ENCODE measurements at regions of chr10 and their contacts with region 1.

Region 1: GRCh38 chr10:69179743-69180524 is at the start of gene SUPV3L1:
- DNase-seq: peak; percentile 99
- ATAC-seq: peak; percentile 88
- H3K4me3 ChIP-seq: peak within 1 kb of the TSS; percentile 83
- H3K27ac ChIP-seq: peak within 1 kb of the TSS; percentile 75
- H3K4me1 ChIP-seq: peaks cover 23% of the 10 kb centered on the region
- H3K27me3 ChIP-seq: no peaks in the 10 kb centered on the region
- CTCF ChIP-seq: no peak
- total RNA-seq, gene SUPV3L1: 86.2 and 117 TPM in 2 replicates

Region 2: DNA sequence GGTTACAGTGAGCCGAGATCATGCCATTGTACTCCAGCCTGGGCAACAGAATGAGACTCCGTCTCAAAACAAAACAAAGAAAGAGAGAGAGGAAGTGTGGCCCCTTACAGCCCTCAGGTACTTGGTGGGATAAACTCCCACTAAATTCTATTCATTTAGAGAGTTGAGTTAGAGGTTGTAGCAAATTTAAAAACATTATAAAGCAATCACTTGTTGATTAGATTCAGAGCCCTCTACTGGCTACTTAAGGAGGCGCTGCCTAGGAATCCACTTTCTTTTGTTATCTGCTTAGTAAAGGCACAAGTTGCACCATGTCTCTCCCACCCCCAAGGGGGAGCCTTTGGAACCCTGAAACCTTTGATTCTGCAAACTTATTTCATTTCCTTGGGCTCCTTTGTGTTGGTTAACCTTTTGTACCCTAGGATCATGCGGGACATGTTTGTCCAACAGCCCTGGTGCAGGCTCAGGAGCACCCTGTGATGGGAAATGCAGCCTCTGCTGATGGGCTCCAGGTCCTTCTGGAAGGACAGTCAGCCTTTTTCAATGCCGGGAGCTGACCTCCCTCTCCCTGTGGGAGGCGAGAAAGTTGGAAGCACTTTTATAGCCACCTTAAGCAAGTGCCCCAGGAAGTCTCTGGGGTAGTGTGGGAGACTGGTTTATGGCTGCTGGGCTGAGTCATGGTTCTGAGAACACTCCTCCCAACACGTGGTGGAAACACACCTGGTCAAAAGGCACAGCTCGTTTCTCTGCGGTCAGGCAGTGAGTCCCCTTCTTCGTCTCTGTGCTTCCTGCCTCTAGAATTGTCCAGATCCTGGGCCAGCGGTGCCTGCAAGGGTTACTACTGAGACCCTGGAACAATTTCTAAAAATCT is 42.5 kb after region 1 on chr10:
- CTCF ChIA-PET with region 1: no interaction called
- POLR2A ChIA-PET with region 1: no interaction called
- intact Hi-C with region 1: loop called (anchors 2 kb)
- DNase-seq: peak; percentile 98
- ATAC-seq: peak; percentile 95
- H3K4me3 ChIP-seq: peak overlapping the region; percentile 52
- H3K27ac ChIP-seq: peak overlapping the region; percentile 86
- H3K4me1 ChIP-seq: peaks cover 28% of the 10 kb centered on the region
- H3K27me3 ChIP-seq: no peaks in the 10 kb centered on the region
- CTCF ChIP-seq: peak; percentile 96

Measured in PC-3 (cell line).